A549 (cell line): ENCODE measurements at regions of chr16 and their contacts with region 1.

Region 1: GRCh38 chr16:75392911-75393310 is 40.4 kb downstream of the CFDP1 start:
- DNase-seq: no peak
- ATAC-seq: no peak
- H3K4me3 ChIP-seq: no peak overlapping the region
- H3K27ac ChIP-seq: no peak overlapping the region
- H3K4me1 ChIP-seq: no peaks in the 10 kb centered on the region
- CTCF ChIP-seq: no peak
- EP300 ChIP-seq: no peak
- POLR2A ChIP-seq: no peak
- RAD21 ChIP-seq: no peak

Region 2: DNA sequence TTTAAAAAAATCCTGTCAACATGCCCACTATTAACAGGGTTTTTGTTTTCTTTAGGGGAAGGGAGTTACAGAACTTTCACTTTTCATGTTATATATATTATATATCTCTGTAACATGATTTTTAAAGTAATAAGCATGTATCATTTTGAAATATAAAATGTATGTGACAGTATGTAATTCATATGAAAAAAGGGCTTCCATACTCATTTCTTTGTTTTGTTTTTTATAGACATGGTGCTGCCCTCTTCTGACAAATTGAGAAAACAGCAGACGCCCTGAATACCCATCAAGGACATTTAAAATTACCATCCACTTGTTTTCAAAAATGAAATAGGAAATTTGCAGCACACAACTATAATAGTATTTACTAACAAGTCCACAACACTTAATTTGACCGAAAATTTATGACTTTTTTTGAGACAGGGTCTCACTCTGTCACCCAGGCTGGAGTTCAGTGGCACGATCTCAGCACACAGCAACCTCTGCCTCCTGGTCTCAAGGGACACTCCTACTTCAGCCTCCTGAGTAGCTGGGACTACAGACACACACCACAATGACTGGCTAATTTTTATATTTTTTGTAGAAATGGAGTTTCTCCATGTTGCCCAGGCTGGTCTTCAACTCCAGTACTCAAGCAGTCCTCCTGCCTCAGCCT is 10.0 kb after region 1 on chr16:
- CTCF ChIA-PET with region 1: interaction called, 22 read pairs
- POLR2A ChIA-PET with region 1: interaction called, 3 read pairs
- DNase-seq: peak; percentile 33 to 44
- ATAC-seq: peak in 1 of 2 experiments; percentile 64; a peak in 2 of 6 replicates
- H3K4me3 ChIP-seq: no peak overlapping the region
- H3K27ac ChIP-seq: no peak overlapping the region
- H3K4me1 ChIP-seq: no peaks in the 10 kb centered on the region
- CTCF ChIP-seq: peak; percentile 77
- EP300 ChIP-seq: no peak
- POLR2A ChIP-seq: no peak
- RAD21 ChIP-seq: peak; percentile 58 to 67